SK-N-SH (cell line): ENCODE measurements at regions of chr7 and their contacts with region 1.

Region 1: DNA sequence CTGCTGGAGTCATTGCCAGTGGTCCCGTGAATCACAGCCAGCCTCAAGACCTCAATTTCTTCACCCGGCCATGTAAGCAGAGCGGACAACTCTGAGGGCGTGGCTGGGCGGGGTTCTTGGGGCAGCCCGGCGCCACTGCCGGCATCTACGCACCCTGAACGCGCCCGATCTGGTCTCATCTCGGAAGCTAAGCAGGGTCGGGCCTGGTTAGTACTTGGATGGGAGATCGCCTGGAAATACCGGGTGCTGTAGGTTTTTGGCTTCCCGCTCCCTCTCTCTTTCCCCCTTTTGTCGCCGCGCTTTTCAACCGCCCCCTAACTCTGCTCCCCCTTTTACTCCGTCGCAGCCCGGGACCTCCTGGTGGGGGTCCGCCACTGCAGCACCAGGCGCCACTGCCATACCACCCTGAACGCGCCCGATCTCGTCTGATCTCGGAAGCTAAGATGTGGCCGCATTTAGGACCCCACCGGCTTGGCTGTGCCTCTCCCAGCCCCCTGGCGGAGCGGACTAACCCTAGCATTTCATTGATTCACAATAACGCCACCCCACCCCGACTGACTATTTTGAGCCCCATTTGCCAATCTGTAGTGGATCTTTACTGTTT is 25.3 kb downstream of the GARIN1A start:
- DNase-seq: peak; percentile 89
- H3K4me3 ChIP-seq: peak overlapping the region; percentile 54 to 60
- H3K27ac ChIP-seq: no peak overlapping the region
- H3K4me1 ChIP-seq: no peaks in the 10 kb centered on the region; a peak in 1 of 4 replicates
- H3K27me3 ChIP-seq: peaks cover 6% of the 10 kb centered on the region; the same call in 1 of the 2 replicates
- CTCF ChIP-seq: peak; percentile 54
- EP300 ChIP-seq: no peak
- RAD21 ChIP-seq: peak; percentile 32; the same call in 1 of the 2 replicates

Region 2: DNA sequence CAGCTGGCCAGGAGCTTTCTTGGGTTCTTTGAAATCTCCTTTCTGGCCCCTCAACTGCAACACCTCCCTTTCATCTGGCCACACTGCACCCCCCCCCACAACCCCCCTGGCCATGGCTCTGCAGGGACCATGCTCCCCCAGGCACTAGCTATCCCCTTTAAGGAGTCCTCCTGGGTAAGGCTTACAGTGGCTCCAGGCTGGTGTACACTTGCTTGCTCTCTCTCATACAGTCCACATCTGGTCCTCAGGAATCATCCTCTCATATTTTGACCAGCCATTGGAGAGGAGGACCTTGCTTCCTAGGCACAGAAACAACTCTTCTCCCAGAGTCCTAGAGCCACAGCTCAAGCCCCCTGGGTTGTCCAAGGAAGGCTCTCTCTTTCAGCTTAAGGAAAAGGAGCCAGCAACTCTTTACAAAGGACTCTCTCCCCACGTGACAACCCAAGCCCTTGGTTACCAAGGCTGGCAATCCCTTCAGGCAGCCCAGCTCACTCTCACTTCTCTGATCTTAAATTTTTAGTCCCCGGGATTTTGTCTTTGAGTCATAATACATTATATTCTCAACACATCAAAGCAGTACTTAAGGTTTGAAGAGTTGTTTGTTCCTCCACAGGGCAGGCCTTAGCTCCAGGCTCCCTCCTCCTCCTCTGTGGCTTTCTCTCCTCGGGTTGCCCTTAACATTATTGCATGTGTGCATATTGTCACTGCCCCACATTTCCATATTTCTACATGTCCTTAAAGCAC is 15.4 kb before region 1 on chr7:
- CTCF ChIA-PET with region 1: interaction called, 10 read pairs
- POLR2A ChIA-PET with region 1: no interaction called
- DNase-seq: no peak
- H3K4me3 ChIP-seq: no peak overlapping the region
- H3K27ac ChIP-seq: no peak overlapping the region
- H3K4me1 ChIP-seq: no peaks in the 10 kb centered on the region
- H3K27me3 ChIP-seq: no peaks in the 10 kb centered on the region
- CTCF ChIP-seq: no peak
- EP300 ChIP-seq: no peak
- RAD21 ChIP-seq: no peak

Region 3: GRCh38 chr7:128710481-128710880 is 13.1 kb after region 1 on chr7:
- CTCF ChIA-PET with region 1: interaction called, 15 read pairs
- POLR2A ChIA-PET with region 1: interaction called, 4 read pairs
- DNase-seq: no peak
- H3K4me3 ChIP-seq: no peak overlapping the region
- H3K27ac ChIP-seq: no peak overlapping the region
- H3K4me1 ChIP-seq: no peaks in the 10 kb centered on the region
- H3K27me3 ChIP-seq: no peaks in the 10 kb centered on the region
- CTCF ChIP-seq: no peak
- EP300 ChIP-seq: no peak
- RAD21 ChIP-seq: no peak

Region 4: DNA sequence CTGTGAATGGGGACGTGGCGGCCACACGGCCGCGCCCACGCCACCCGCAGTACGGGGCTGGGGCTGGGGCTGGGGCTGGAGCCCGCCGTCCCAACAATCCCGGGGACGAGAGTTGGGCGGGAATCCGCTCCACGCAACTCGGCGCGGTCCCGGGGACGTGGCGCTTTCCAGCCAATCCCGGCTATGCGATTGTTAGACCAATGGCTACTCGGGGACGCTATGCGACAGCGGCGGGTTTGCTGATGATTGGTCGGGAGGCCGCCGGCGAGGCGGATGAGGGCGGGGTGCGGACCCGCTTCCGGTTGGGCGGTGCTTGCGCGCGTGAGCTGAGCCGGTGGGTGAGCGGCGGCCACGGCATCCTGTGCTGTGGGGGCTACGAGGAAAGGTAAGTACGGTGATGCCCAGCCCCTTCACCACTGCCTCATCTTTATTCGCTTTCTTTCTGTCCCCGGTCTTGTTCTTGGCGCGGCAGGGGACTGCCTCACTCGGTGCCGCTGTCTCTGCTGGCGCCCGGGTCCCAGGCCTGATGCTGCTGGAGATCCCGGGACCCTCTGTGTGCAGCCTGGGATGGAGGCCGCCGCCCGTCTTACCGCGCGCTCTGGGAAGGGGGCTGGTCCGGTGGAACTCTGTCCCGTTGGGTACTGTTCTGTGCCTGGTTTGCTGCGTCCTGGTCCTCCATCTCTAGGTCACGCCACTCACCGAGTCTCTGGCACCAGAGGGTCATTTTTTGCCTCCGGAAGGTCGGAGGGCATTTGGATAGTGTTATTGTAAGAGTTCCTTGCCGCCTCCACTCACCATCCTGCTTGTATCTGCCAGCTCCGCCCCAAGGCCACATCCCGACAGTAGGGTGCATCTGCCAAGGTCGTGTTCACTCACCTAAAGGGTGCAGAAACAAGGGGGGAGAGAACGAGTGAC is 41.9 kb after region 1 on chr7 and contains the start of gene CALU:
- CTCF ChIA-PET with region 1: interaction called, 10 read pairs
- POLR2A ChIA-PET with region 1: no interaction called
- DNase-seq: peak; percentile 100
- H3K4me3 ChIP-seq: peak within 1 kb of the TSS; percentile 81 to 85
- H3K27ac ChIP-seq: peak within 1 kb of the TSS; percentile 94 to 96
- H3K4me1 ChIP-seq: peaks cover 18 to 26% of the 10 kb centered on the region in 2 experiments; a peak in 3 of 4 replicates
- H3K27me3 ChIP-seq: no peaks in the 10 kb centered on the region
- CTCF ChIP-seq: no peak
- EP300 ChIP-seq: peak in 1 of 2 experiments; percentile 41; a peak in 2 of 4 replicates
- RAD21 ChIP-seq: no peak
- polyA plus RNA-seq, gene CALU: 195 and 294 TPM in 2 replicates

Region 5: DNA sequence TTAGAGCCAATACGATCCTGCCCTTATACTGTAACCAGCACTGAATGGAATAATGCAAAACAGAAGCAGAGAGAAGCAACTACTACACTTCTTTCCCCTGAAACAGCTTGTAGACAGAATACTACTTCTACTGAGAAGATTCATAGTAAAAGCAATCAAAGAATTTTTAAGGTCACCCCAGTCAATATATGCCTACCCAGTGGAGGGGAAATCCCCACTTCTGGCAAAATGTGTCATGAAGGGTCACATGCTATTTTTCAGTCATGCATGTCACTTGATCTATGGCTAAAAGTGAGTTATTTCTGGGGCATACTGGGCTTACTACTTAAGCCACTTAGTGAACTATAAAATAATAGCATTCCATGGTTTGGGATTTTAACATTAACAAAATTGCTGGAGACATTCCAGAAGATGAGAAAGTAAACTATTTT is 265.9 kb after region 1 on chr7:
- CTCF ChIA-PET with region 1: no interaction called
- POLR2A ChIA-PET with region 1: no interaction called
- DNase-seq: no peak
- H3K4me3 ChIP-seq: no peak overlapping the region
- H3K27ac ChIP-seq: peak overlapping the region in 1 of 2 experiments; percentile 4; a peak in 1 of 4 replicates
- H3K4me1 ChIP-seq: no peaks in the 10 kb centered on the region; a peak in 2 of 4 replicates
- H3K27me3 ChIP-seq: no peaks in the 10 kb centered on the region
- CTCF ChIP-seq: no peak
- EP300 ChIP-seq: no peak
- RAD21 ChIP-seq: no peak

Region 6: DNA sequence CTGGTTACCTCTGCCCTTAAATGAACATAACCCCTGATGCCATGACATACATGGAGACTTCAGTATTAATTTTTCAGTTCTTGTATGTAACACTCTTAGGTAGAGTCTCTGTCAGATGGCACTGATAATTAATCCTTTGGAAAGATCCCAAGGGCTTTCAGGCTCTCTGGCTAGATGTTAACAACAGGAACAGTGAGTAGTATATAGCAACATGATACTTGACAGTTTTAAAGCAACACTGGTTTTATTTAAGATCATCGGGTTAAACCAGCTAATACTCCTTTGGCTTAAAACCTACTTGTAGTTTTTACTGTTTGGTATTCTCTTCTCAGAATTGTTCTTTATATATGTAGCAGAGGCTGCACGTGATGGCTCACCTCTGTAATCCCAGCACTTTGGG is 554.7 kb after region 1 on chr7:
- CTCF ChIA-PET with region 1: no interaction called
- POLR2A ChIA-PET with region 1: no interaction called
- DNase-seq: peak; percentile 36
- H3K4me3 ChIP-seq: no peak overlapping the region
- H3K27ac ChIP-seq: no peak overlapping the region
- H3K4me1 ChIP-seq: peaks cover 0 to 6% of the 10 kb centered on the region in 2 experiments; a peak in 3 of 4 replicates
- H3K27me3 ChIP-seq: no peaks in the 10 kb centered on the region
- CTCF ChIP-seq: no peak
- EP300 ChIP-seq: peak in 1 of 2 experiments; percentile 12; a peak in 1 of 4 replicates
- RAD21 ChIP-seq: no peak